ENCODE measurements at regions of chr5 and their contacts with region 1.

Region 1: GRCh38 chr5:112691758-112692157 is 45.9 kb upstream of the APC start:
- DNase-seq: peak; percentile 62 to 73
- H3K4me3 ChIP-seq: no peak overlapping the region
- H3K4me3 Mint-ChIP-seq: no peak overlapping the region
- H3K27ac Mint-ChIP-seq: no peak overlapping the region
- H3K4me1 ChIP-seq: peaks cover 4% of the 10 kb centered on the region; the same call in 1 of the 2 replicates
- H3K4me1 Mint-ChIP-seq: peaks cover 14% of the 10 kb centered on the region
- H3K27me3 ChIP-seq: no peaks in the 10 kb centered on the region
- H3K27me3 Mint-ChIP-seq: peaks cover 6% of the 10 kb centered on the region
- CTCF ChIP-seq: peak; percentile 61 to 80

Region 2: DNA sequence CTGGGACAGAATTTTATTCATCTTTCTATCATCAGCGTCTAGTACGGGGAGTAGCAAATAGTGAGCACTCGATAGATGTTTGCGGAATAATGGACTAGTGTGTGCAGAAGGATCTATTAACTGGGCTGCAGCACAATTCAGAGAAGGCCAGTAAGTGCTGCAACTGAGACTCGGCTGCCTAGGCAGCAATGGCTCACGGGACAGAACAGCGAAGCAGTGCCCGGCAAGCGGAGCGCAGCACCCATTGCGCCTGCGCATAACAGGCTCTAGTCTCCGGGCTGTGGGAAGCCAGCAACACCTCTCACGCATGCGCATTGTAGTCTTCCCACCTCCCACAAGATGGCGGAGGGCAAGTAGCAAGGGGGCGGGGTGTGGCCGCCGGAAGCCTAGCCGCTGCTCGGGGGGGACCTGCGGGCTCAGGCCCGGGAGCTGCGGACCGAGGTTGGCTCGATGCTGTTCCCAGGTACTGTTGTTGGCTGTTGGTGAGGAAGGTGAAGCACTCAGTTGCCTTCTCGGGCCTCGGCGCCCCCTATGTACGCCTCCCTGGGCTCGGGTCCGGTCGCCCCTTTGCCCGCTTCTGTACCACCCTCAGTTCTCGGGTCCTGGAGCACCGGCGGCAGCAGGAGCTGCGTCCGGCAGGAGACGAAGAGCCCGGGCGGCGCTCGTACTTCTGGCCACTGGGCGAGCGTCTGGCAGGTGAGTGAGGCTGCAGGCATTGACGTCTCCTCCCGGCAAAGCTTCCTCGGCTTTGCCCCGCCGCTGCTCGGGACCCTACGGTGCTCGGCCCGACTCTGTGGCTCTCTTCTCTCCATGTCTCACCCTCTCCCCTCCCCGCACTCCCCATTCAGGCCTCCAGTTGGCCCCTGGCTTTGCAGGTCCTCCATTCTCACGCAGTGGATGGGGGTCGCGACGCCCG is 15.7 kb after region 1 on chr5:
- CTCF ChIA-PET with region 1: interaction called, 11 read pairs
- POLR2A ChIA-PET with region 1: interaction called, 5 read pairs
- intact Hi-C with region 1: no loop called
- DNase-seq: peak; percentile 98 to 99
- H3K4me3 ChIP-seq: peak overlapping the region; percentile 81
- H3K4me3 Mint-ChIP-seq: peak overlapping the region; percentile 99
- H3K27ac Mint-ChIP-seq: peak overlapping the region; percentile 79
- H3K4me1 ChIP-seq: peaks cover 20% of the 10 kb centered on the region
- H3K4me1 Mint-ChIP-seq: peaks cover 33% of the 10 kb centered on the region
- H3K27me3 ChIP-seq: no peaks in the 10 kb centered on the region
- H3K27me3 Mint-ChIP-seq: peaks cover 3% of the 10 kb centered on the region
- CTCF ChIP-seq: peak in 1 of 2 experiments; percentile 8

Region 3: DNA sequence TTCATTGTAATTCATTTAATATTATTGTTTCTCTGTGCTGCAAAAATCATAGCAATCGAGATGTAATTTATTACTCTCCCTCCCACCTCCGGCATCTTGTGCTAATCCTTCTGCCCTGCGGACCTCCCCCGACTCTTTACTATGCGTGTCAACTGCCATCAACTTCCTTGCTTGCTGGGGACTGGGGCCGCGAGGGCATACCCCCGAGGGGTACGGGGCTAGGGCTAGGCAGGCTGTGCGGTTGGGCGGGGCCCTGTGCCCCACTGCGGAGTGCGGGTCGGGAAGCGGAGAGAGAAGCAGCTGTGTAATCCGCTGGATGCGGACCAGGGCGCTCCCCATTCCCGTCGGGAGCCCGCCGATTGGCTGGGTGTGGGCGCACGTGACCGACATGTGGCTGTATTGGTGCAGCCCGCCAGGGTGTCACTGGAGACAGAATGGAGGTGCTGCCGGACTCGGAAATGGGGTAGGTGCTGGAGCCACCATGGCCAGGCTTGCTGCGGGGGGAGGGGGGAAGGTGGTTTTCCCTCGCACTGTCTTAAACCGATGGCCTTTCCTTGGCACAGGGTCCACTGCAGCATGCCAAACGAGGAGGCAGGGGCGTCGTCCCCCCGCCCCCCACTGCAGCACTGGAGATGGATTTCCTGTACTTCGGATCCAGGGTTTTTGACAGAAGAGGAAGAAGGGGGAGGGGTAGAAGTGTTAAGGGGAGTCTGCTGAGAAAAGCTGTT is 45.9 kb after region 1 on chr5 and contains the start of gene APC:
- CTCF ChIA-PET with region 1: no interaction called
- POLR2A ChIA-PET with region 1: no interaction called
- intact Hi-C with region 1: loop called (anchors 5 kb)
- DNase-seq: peak; percentile 71 to 79
- H3K4me3 ChIP-seq: peak within 1 kb of the TSS; percentile 57
- H3K4me3 Mint-ChIP-seq: peak within 1 kb of the TSS; percentile 76
- H3K27ac Mint-ChIP-seq: no peak within 1 kb of the TSS
- H3K4me1 ChIP-seq: no peaks in the 10 kb centered on the region
- H3K4me1 Mint-ChIP-seq: no peaks in the 10 kb centered on the region
- H3K27me3 ChIP-seq: no peaks in the 10 kb centered on the region
- H3K27me3 Mint-ChIP-seq: no peaks in the 10 kb centered on the region
- CTCF ChIP-seq: no peak
- total RNA-seq, gene APC: 27.5 and 28.6 TPM in 2 replicates

Region 4: GRCh38 chr5:112757468-112758208 is 65.9 kb after region 1 on chr5:
- CTCF ChIA-PET with region 1: interaction called, 58 read pairs
- POLR2A ChIA-PET with region 1: no interaction called
- intact Hi-C with region 1: loop called (anchors 1 kb)
- DNase-seq: peak in 1 of 2 experiments; percentile 43
- H3K4me3 ChIP-seq: no peak overlapping the region
- H3K4me3 Mint-ChIP-seq: no peak overlapping the region
- H3K27ac Mint-ChIP-seq: no peak overlapping the region
- H3K4me1 ChIP-seq: no peaks in the 10 kb centered on the region
- H3K4me1 Mint-ChIP-seq: no peaks in the 10 kb centered on the region
- H3K27me3 ChIP-seq: no peaks in the 10 kb centered on the region
- H3K27me3 Mint-ChIP-seq: no peaks in the 10 kb centered on the region
- CTCF ChIP-seq: peak; percentile 61 to 78

Region 5: DNA sequence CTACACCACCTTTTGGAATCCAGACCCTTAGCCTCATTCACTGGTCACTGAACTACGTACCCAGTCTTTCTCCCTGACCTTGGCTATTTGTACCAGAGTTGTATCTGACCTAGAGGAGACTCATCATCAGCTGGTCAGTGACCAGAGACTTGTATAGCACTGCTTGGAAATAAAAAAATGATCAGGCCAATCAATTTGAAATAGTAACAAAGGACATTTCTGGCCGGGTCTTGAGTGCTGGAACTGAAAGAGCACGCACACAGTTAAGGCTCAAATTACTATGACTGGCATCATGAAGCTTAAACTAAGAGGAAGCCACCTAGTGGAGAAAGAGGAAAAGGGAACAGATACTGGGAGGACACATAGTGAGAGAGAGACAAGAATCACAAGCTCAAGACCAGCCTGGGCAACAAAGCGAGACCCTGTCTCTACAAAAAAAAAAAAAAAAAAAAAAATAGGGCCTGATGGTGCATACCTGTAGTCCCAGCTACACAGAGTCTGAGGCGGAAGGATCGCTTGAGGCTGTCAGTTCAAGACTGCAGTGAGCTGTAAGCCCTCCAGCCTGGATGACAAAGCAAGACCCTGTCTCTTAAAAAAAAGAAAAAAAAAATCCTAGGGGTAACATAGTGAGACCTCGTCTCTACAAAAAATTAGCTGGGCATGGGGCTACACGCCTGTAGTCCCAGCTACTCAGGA is 156.5 kb after region 1 on chr5:
- CTCF ChIA-PET with region 1: interaction called, 37 read pairs
- POLR2A ChIA-PET with region 1: no interaction called
- intact Hi-C with region 1: loop called (anchors 1 kb)
- DNase-seq: peak in 1 of 2 experiments; percentile 57
- H3K4me3 ChIP-seq: no peak overlapping the region
- H3K4me3 Mint-ChIP-seq: no peak overlapping the region
- H3K27ac Mint-ChIP-seq: no peak overlapping the region
- H3K4me1 ChIP-seq: no peaks in the 10 kb centered on the region
- H3K4me1 Mint-ChIP-seq: no peaks in the 10 kb centered on the region
- H3K27me3 ChIP-seq: no peaks in the 10 kb centered on the region
- H3K27me3 Mint-ChIP-seq: no peaks in the 10 kb centered on the region
- CTCF ChIP-seq: peak; percentile 47 to 74